ENCODE measurements at regions of chr12 and their contacts with region 1.

Region 1: DNA sequence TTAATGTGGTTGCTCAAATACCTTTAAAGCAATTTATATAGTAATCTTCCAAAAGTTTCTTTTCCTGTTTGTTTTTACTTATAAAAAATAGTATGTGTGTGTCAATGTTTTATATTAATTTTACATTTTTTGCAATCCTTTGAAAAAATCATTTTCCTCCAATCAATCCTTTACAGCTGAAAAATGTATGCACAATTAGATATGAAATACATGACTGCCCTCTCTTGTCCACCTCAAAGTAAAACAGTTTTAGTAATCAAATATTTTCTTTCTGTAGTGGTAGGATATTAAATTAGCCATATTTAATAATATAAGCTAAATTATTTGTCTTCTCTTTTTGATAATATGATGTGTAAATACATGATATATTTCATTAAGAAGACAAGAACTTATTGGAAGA is 269.9 kb downstream of the ADAMTS20 start:
- DNase-seq: no peak
- H3K4me3 Mint-ChIP-seq: no peak overlapping the region
- H3K27ac Mint-ChIP-seq: no peak overlapping the region
- H3K4me1 Mint-ChIP-seq: peaks cover 23% of the 10 kb centered on the region
- H3K27me3 Mint-ChIP-seq: no peaks in the 10 kb centered on the region
- CTCF ChIP-seq: no peak

Region 2: DNA sequence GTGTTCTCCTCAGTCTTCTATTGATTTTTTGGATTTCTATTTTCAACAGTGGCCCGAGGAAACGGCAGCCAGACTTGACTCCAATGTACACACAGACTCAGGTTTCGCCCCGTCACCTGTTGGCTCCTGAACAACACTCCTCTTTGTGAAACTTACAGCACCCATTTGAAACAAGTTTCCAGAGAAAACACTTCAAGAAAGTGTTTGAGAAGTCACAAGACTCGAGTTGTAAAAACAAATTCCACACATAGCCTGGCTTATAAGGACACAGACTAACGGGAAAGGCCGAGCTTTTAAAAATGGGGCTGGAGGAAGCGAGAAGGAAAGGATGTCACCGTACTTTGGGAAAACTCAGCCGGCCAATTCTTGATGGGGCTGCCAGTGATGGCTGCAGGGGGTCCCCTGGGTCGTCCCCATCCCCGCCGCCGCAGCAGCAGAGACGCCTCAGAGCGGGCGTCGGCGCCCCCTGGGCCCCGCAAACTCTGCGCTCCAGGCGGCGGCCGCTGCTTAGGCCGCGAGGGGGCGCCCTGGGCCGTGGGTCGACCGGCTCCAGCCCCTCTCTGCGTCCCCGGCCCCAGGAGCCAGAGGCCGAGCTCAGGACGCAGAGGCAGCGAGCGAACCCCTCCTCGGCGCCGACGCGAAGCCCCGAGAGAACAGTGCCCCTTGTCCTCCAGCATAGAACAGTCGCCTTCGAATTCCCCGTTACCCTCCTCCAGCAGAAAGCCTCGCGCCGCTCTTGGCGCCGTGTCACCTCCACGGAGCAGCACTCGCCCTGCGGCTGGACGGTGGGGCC is 799.5 kb before region 1 on chr12:
- CTCF ChIA-PET with region 1: interaction called, 9 read pairs
- intact Hi-C with region 1: loop called (anchors 5 kb)
- DNase-seq: peak; percentile 86
- H3K4me3 Mint-ChIP-seq: peak overlapping the region; percentile 96
- H3K27ac Mint-ChIP-seq: peak overlapping the region; percentile 66
- H3K4me1 Mint-ChIP-seq: peaks cover 9% of the 10 kb centered on the region
- H3K27me3 Mint-ChIP-seq: no peaks in the 10 kb centered on the region
- CTCF ChIP-seq: peak; percentile 59

Region 3: DNA sequence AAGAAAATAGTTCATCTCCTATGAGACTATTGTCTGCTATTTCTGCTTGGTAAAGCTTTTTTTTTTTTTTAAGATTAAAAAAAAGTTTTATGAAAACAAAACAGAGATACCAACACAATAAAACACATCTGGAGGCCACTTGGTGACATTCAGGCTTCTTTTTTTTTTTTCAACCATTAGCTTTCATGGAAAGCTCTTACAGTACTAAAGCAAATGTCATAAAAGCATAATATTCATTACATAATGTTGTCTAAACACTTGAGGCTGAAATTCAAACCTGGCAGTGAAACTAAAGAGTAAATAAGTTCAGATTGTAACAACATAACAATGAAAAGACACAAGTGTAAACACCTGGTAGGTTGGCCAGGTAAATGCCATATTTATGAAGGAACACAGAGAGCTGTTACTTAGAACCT is 707.2 kb before region 1 on chr12:
- CTCF ChIA-PET with region 1: interaction called, 5 read pairs
- intact Hi-C with region 1: loop called (anchors 5 kb)
- DNase-seq: no peak
- H3K4me3 Mint-ChIP-seq: no peak overlapping the region
- H3K27ac Mint-ChIP-seq: no peak overlapping the region
- H3K4me1 Mint-ChIP-seq: peaks cover 5% of the 10 kb centered on the region
- H3K27me3 Mint-ChIP-seq: no peaks in the 10 kb centered on the region
- CTCF ChIP-seq: no peak

Region 4: DNA sequence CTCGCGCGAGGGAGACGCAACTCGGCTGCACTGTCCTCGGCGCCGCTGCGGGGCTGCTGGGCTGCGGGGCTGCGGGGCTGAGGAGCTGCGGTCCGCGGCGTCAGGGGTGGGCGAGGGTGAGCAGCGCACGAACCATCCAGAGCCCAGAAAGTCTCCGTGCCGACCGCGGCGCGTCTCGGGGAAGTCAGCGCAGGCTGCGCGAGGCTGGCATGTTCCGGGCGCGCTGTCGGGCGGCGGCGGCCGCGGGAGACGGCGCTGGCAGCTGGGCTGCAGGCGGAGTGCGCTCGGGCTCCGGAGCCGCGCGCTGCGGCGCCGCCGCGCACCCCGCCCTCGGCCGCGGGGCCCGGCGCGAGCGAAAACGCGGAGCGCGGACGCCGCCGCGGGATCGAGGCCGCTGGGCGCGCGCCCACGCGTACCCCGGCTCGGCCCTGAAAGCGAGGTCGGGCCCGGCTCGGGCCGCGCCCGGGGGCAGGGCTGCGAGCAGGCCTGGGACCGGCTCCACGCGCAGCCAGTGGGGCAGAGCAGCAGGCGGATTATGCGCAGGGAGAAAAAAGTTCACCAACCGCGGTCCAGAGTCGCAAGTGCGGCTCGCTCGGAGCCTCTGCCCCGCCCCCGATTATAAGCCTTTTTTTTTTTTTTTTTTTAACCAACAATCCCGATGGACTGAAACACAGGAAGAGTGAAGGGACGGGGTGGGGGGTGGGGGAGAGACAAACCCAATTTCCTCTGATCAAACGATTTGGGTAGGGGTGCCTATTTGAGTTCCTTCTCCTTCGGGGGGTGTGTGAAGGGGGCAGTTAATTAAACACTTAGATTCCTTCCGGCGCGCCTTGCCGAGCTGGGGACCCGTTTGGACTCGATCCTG is 692.4 kb before region 1 on chr12 and contains the start of gene PRICKLE1:
- CTCF ChIA-PET with region 1: interaction called, 3 read pairs
- intact Hi-C with region 1: loop called (anchors 1 kb)
- DNase-seq: peak; percentile 48
- H3K4me3 Mint-ChIP-seq: peak within 1 kb of the TSS; percentile 81
- H3K27ac Mint-ChIP-seq: peak within 1 kb of the TSS; percentile 36
- H3K4me1 Mint-ChIP-seq: peaks cover 15% of the 10 kb centered on the region
- H3K27me3 Mint-ChIP-seq: no peaks in the 10 kb centered on the region
- CTCF ChIP-seq: no peak
- total RNA-seq, gene PRICKLE1: 7.0 and 12.7 TPM in 2 replicates

Measured in Calu3 (cell line).